Endothelial cell of umbilical vein (primary cell): ENCODE measurements at regions of chr2 and their contacts with region 1.

Region 1: DNA sequence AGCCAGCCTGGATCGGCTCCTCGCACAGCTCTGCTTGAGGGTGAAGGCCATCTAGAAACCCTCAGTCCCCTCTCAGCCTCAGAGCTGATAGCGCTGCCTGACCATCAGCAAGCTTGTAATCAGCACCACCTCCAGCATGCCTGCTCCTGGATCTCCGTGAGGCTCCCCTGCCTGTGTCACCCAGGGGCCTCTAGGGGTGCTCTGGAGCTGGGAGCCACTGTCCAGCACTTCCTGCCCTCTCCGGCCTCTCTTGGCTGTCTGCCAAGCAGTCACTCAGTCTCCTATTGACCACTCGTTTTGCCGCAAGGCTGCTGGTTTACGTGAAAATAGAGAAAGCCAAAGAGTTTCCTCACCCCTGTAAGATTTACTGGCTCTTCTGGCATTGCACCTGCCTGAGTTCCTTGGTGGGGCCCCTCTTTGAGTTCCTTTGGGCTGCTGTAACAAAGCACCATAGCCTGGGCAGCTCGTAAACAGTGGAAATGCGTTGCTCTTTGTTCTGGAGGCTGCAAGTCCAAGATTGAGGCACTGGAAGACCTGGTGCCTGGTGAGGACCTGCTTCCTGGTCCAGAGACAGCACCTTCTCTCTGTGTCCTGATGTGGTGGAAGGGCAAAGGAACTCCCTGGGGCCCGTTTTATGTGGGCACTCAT is 17.9 kb downstream of the CAPN10 start:
- DNase-seq: peak; percentile 70
- H3K4me3 ChIP-seq: no peak overlapping the region
- H3K27ac ChIP-seq: no peak overlapping the region
- H3K4me1 ChIP-seq: peaks cover 2% of the 10 kb centered on the region
- H3K27me3 ChIP-seq: no peaks in the 10 kb centered on the region
- CTCF ChIP-seq: peak; percentile 74 to 85
- POLR2A ChIP-seq: no peak

Region 2: GRCh38 chr2:240586198-240586918 is 18.1 kb before region 1 on chr2 and contains the start of gene CAPN10:
- CTCF ChIA-PET with region 1: interaction called, 10 read pairs
- POLR2A ChIA-PET with region 1: no interaction called
- dilution Hi-C with region 1: no loop called
- intact Hi-C with region 1: no loop called
- DNase-seq: peak; percentile 95
- H3K4me3 ChIP-seq: peak within 1 kb of the TSS; percentile 76 to 84 (median 84)
- H3K27ac ChIP-seq: peak within 1 kb of the TSS; percentile 74
- H3K4me1 ChIP-seq: peaks cover 17% of the 10 kb centered on the region
- H3K27me3 ChIP-seq: no peaks in the 10 kb centered on the region
- CTCF ChIP-seq: no peak
- POLR2A ChIP-seq: peak; percentile 66
- total RNA-seq, gene CAPN10: 37.9 and 39.9 TPM in 2 replicates

Region 3: DNA sequence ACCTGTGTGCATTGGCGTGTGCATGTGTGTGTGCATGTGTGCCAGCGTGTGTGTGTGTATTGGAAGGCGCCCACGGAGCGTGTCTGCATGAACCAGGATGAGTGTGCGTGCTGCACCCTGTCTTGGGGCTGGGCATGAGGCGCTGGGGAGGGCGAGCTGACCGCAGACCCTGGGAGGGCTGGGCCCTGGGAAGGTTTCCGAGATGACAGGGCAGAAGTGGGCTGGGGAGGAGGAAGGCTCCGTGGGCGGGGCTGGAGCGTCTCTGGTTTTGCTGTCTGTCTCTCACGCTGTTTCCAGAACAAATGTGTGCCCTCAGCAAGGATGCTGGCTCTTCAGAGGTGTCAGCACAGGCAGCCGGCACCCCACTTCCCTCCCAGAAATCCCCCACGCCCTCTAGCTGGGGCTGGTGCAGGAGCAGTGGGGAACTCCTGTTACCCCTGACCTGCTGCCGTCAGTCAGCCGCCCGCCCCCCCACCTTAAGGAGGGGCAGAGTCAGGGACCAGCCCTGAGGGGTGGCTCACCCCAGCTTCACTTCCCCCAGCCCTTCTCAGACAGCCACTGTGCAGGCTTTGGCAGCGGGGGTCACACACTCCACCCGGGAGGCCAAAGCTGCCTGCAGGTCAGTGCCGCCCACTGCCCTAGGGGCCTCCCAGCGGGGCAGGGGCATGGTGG is 20.7 kb after region 1 on chr2 and contains the start of gene GPR35:
- CTCF ChIA-PET with region 1: no interaction called
- POLR2A ChIA-PET with region 1: no interaction called
- dilution Hi-C with region 1: no loop called
- intact Hi-C with region 1: no loop called
- DNase-seq: no peak
- H3K4me3 ChIP-seq: no peak within 1 kb of the TSS
- H3K27ac ChIP-seq: no peak within 1 kb of the TSS
- H3K4me1 ChIP-seq: no peaks in the 10 kb centered on the region
- H3K27me3 ChIP-seq: no peaks in the 10 kb centered on the region
- CTCF ChIP-seq: no peak
- POLR2A ChIP-seq: no peak
- total RNA-seq, gene GPR35: 0.25 and 0.33 TPM in 2 replicates